CD4-positive, alpha-beta T cell (primary cell): ENCODE measurements at regions of chr5 and their contacts with region 1.

Region 1: DNA sequence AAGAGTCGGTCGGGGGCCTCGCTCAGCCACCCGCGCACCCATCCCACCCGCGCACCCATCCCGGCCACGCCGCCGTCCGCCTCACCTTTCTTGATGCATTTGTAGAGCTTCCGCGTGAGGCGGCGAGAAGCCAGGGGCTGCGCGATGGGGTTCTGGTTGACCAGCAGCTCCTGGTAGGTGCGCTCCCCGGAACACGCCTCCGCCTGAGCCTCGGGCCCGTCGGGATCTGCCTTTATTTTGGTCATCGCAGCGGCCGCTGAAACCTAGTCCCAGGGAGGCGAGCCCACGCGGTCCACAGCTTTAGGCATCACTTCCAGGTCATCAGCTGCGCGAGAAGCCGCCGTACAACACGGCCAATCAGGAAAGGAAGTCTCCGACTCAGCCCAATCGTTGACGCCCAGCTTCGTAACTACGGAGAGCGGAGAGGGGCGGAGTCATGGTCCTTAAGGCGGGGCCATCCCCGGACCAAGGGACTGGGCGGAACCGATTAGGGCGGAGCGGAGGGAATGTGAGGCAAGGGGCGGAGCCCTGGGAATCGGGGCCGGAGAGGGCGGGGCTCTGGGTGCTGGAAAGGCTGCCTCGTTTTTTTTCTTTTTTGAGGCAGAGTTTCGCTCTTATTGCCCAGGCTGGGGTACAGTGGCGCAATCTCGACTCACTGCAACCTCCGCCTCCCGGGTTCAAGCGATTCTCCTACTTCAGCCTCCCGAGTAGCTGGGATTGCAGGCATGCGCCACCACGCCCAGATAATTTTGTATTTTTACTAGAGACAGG is at the start of gene NHP2:
- DNase-seq: peak; percentile 94 to 100 (median 97)
- ATAC-seq: peak; percentile 98
- H3K4me3 ChIP-seq: peak within 1 kb of the TSS; percentile 76
- H3K4me3 Mint-ChIP-seq: peak within 1 kb of the TSS; percentile 91
- H3K27ac ChIP-seq: peak within 1 kb of the TSS; percentile 28 to 29
- H3K27ac Mint-ChIP-seq: peak within 1 kb of the TSS; percentile 83
- H3K4me1 ChIP-seq: peaks cover 35% of the 10 kb centered on the region
- H3K4me1 Mint-ChIP-seq: peaks cover 24% of the 10 kb centered on the region
- H3K27me3 ChIP-seq: no peaks in the 10 kb centered on the region
- H3K27me3 Mint-ChIP-seq: no peaks in the 10 kb centered on the region
- CTCF ChIP-seq: no peak
- total RNA-seq, gene NHP2: 42.2 to 44.5 TPM

Region 2: DNA sequence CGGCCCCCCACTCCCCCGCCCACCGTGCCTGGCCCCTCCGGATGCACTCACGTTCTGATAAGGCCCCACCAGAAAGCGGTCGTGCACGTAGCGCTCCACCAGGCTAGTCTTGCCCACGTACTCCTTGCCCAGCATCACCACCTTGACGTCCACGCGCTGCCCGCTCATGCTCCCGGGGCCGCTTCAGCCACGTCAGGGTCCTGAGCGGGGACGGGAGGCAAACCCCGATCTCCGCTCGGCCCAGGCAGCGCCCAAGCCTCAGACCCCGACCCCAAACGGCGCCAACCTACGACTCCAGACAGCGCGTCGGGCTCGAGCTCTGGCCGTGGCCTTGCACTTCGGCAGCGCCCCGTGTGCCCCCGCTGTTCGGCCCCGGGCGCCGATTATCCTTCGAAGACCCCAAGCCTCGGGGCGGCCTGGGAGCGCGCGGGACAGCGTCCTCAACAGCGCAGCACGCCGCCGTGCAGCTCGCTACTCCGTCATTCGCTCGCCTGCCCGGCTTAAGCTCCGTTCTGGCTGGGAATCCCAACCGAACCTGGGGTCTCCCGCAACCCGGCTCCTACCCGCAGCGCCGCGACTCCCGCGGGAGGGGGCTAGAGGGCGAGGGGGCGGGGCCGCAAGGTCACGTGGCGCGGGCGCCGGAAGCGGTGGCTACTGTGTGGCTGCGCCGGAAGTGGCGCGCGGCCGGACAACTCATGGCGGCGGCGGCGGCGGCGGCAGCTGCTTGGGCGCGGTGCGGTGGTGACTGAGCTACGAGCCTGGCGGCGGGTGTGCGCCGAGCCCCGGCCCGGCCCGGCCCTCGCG is 850.4 kb before region 1 on chr5 and contains the starts of genes PRELID1 and RAB24:
- CTCF ChIA-PET with region 1: no interaction called
- POLR2A ChIA-PET with region 1: no interaction called
- intact Hi-C with region 1: loop called in 1 of 2 experiments (anchors 10 kb)
- DNase-seq: peak; percentile 73 to 95 (median 86)
- ATAC-seq: peak; percentile 67
- H3K4me3 ChIP-seq: peak within 1 kb of the TSS; percentile 92
- H3K4me3 Mint-ChIP-seq: peak within 1 kb of the TSS; percentile 90
- H3K27ac ChIP-seq: peak within 1 kb of the TSS; percentile 60 to 78
- H3K27ac Mint-ChIP-seq: peak within 1 kb of the TSS; percentile 88
- H3K4me1 ChIP-seq: peaks cover 82% of the 10 kb centered on the region
- H3K4me1 Mint-ChIP-seq: peaks cover 81% of the 10 kb centered on the region
- H3K27me3 ChIP-seq: no peaks in the 10 kb centered on the region
- H3K27me3 Mint-ChIP-seq: no peaks in the 10 kb centered on the region
- CTCF ChIP-seq: peak; percentile 43
- total RNA-seq, gene PRELID1: 33.1 to 35.0 TPM
- total RNA-seq, gene RAB24: 17.0 to 18.0 TPM

Region 3: GRCh38 chr5:177599731-177600507 is 553.8 kb before region 1 on chr5 and contains the start of gene B4GALT7:
- CTCF ChIA-PET with region 1: no interaction called
- POLR2A ChIA-PET with region 1: no interaction called
- intact Hi-C with region 1: loop called in 1 of 2 experiments (anchors 5 kb)
- DNase-seq: peak; percentile 59 to 93 (median 85)
- ATAC-seq: peak; percentile 89
- H3K4me3 ChIP-seq: peak within 1 kb of the TSS; percentile 96
- H3K4me3 Mint-ChIP-seq: peak within 1 kb of the TSS; percentile 97
- H3K27ac ChIP-seq: peak within 1 kb of the TSS; percentile 56 to 73
- H3K27ac Mint-ChIP-seq: peak within 1 kb of the TSS; percentile 85
- H3K4me1 ChIP-seq: peaks cover 27% of the 10 kb centered on the region
- H3K4me1 Mint-ChIP-seq: peaks cover 31% of the 10 kb centered on the region
- H3K27me3 ChIP-seq: no peaks in the 10 kb centered on the region
- H3K27me3 Mint-ChIP-seq: no peaks in the 10 kb centered on the region
- CTCF ChIP-seq: no peak
- total RNA-seq, gene B4GALT7: 31.1 to 33.8 TPM

Region 4: DNA sequence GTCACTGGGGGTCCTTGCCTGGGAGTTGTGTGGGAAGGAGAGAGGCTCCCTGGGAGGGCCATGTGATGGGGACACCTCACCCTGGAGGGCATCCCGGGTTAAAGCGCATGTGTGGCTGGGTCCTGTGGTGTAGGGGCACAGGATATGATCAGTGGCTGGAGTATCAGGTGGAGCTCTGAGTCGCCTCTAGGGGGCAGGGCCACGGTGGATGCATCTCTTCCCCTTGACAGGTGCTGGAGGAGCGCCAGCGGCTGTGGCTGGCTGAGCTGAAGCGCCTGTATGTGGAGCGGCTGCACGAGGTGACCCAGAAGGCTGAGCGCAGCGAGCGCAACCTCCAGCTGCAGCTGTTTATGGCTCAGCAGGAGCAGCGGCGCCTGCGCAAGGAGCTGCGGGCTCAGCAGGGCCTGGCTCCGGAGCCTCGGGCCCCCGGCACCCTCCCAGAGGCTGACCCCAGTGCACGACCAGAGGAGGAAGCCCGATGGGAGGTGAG is 32.8 kb before region 1 on chr5:
- CTCF ChIA-PET with region 1: interaction called, 7 read pairs
- POLR2A ChIA-PET with region 1: interaction called, 13 read pairs
- intact Hi-C with region 1: no loop called
- DNase-seq: peak; percentile 80 to 94 (median 88)
- ATAC-seq: peak; percentile 92
- H3K4me3 ChIP-seq: peak overlapping the region; percentile 40
- H3K4me3 Mint-ChIP-seq: peak overlapping the region; percentile 76
- H3K27ac ChIP-seq: no peak overlapping the region
- H3K27ac Mint-ChIP-seq: peak overlapping the region; percentile 72
- H3K4me1 ChIP-seq: peaks cover 56% of the 10 kb centered on the region
- H3K4me1 Mint-ChIP-seq: peaks cover 29% of the 10 kb centered on the region
- H3K27me3 ChIP-seq: peaks cover 0 to 2% of the 10 kb centered on the region in 2 experiments
- H3K27me3 Mint-ChIP-seq: no peaks in the 10 kb centered on the region
- CTCF ChIP-seq: peak; percentile 73

Region 5: DNA sequence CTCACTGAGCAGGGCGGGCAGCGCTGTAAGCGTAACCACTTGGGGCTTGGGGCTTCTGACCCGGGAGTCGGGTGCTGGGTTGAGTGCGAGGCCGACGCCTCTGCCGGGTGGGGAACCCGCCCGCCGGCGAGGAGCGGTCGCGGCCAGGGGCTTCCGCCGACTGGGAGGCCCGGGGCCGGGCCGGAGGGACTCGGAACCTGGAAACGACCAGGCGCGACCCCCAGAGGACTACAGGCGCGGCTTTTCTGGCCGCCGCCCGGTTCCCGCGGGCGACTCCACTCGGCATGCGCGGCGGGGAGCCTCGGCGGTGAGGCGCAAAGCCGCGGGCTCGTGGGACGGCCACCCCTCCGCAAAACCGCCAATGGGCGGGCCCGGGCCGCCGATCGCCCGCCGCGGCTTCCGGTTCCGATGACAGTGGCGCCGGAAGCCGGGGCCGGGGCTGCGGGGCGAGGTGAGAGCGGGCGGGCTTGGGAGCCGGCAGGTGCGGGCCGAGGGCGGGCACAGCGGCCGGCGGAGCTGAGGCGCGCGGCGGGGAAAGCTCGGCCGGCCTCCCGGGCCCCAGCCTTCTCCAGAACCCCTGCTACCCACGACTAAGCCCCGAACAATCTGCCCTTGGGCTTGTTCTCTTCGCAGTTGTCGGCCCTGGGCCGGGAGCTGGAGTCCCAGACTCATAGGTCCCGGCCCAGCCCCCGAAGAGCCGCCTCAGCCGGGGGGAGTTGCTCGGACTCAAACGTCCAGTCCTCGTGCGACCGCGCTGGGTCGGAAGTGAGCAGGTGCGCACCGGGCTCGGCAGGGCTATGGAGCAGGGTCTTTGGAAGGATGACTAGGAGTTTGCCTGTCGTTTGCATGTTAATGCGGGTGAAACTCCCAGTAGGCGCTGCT is 22.9 kb before region 1 on chr5 and contains the start of gene RMND5B:
- CTCF ChIA-PET with region 1: no interaction called
- POLR2A ChIA-PET with region 1: interaction called, 23 read pairs
- intact Hi-C with region 1: loop called in 1 of 2 experiments (anchors 1 kb)
- DNase-seq: peak; percentile 65 to 91 (median 77)
- ATAC-seq: peak; percentile 86
- H3K4me3 ChIP-seq: peak within 1 kb of the TSS; percentile 60
- H3K4me3 Mint-ChIP-seq: peak within 1 kb of the TSS; percentile 90
- H3K27ac ChIP-seq: peak within 1 kb of the TSS; percentile 42 to 69
- H3K27ac Mint-ChIP-seq: peak within 1 kb of the TSS; percentile 75
- H3K4me1 ChIP-seq: peaks cover 19% of the 10 kb centered on the region
- H3K4me1 Mint-ChIP-seq: peaks cover 29% of the 10 kb centered on the region
- H3K27me3 ChIP-seq: no peaks in the 10 kb centered on the region
- H3K27me3 Mint-ChIP-seq: no peaks in the 10 kb centered on the region
- CTCF ChIP-seq: no peak
- total RNA-seq, gene RMND5B: 12.0 to 13.8 TPM

Region 6: DNA sequence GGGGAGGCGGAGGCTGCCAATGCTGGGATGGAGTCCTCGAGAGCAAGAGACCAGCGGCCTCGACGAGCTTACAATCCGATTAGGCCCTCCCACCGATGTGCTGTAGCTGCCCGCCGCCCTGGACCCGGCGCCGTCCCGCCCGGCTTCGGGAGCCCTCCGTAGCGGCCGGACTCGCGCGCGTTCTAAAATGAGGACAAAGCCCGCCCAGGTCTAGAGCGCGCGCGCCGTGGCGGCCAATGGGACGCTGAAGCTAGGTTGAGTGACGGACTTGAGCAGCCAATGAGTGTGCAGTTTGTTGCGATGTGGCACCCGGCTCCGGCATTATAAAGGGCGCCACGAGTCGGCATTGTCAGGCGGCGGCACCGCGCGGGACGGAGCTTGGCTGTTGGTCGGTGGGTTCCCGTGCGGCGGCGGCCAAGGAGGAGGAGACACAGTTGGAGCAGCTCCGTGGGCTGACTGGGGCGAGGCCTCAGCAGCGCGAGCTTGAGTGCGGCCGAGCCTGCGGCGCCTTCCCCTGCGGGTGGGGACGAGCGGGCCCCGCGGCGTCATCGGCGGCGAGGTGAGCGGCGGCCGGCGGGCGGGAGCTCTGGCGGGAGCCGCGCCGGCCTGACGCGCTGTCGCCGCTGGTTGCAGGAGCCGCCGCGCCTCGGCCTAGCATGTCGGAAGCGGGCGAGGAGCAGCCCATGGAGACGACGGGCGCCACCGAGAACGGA is 50.6 kb after region 1 on chr5 and contains the start of gene HNRNPAB:
- CTCF ChIA-PET with region 1: interaction called, 3 read pairs
- POLR2A ChIA-PET with region 1: interaction called, 12 read pairs
- intact Hi-C with region 1: loop called in 1 of 2 experiments (anchors 2 kb)
- DNase-seq: peak; percentile 93 to 99 (median 97)
- ATAC-seq: peak; percentile 81
- H3K4me3 ChIP-seq: peak within 1 kb of the TSS; percentile 97
- H3K4me3 Mint-ChIP-seq: peak within 1 kb of the TSS; percentile 100
- H3K27ac ChIP-seq: peak within 1 kb of the TSS; percentile 29 to 62
- H3K27ac Mint-ChIP-seq: peak within 1 kb of the TSS; percentile 93
- H3K4me1 ChIP-seq: peaks cover 35% of the 10 kb centered on the region
- H3K4me1 Mint-ChIP-seq: peaks cover 40% of the 10 kb centered on the region
- H3K27me3 ChIP-seq: no peaks in the 10 kb centered on the region
- H3K27me3 Mint-ChIP-seq: peaks cover 4% of the 10 kb centered on the region
- CTCF ChIP-seq: no peak
- total RNA-seq, gene HNRNPAB: 63.6 to 68.9 TPM